ENCODE measurements at regions of chr3 and their contacts with region 1.

Region 1: GRCh38 chr3:187227658-187228258 is 30.5 kb downstream of the RTP1 start:
- DNase-seq: no peak
- ATAC-seq: no peak
- H3K4me3 ChIP-seq: no peak overlapping the region
- H3K27ac ChIP-seq: no peak overlapping the region
- H3K4me1 ChIP-seq: no peaks in the 10 kb centered on the region
- H3K27me3 ChIP-seq: no peaks in the 10 kb centered on the region
- CTCF ChIP-seq: no peak

Region 2: GRCh38 chr3:187291001-187291511 is 63.3 kb after region 1 on chr3:
- intact Hi-C with region 1: loop called in 4 of 10 experiments (anchors 5 to 10 kb)
- DNase-seq: peak in 1 of 2 donors; percentile 17
- ATAC-seq: peak; percentile 23 to 59 (median 44)
- H3K4me3 ChIP-seq: peak overlapping the region; percentile 20 to 65 (median 51)
- H3K27ac ChIP-seq: peak overlapping the region; percentile 57 to 92 (median 84)
- H3K4me1 ChIP-seq: peaks cover 2 to 64% (median 24%) of the 10 kb centered on the region in 9 donors
- H3K27me3 ChIP-seq: peaks cover 0 to 11% (median 0%) of the 10 kb centered on the region in 7 donors
- CTCF ChIP-seq: no peak

Region 3: GRCh38 chr3:187314176-187314575 is 86.4 kb after region 1 on chr3:
- intact Hi-C with region 1: loop called in 7 of 10 experiments (anchors 2 to 10 kb)
- DNase-seq: no peak
- ATAC-seq: no peak
- H3K4me3 ChIP-seq: no peak overlapping the region
- H3K27ac ChIP-seq: no peak overlapping the region
- H3K4me1 ChIP-seq: peaks cover 0 to 8% (median 4%) of the 10 kb centered on the region in 9 donors
- H3K27me3 ChIP-seq: peaks cover 0 to 28% (median 11%) of the 10 kb centered on the region in 7 donors
- CTCF ChIP-seq: no peak

Region 4: DNA sequence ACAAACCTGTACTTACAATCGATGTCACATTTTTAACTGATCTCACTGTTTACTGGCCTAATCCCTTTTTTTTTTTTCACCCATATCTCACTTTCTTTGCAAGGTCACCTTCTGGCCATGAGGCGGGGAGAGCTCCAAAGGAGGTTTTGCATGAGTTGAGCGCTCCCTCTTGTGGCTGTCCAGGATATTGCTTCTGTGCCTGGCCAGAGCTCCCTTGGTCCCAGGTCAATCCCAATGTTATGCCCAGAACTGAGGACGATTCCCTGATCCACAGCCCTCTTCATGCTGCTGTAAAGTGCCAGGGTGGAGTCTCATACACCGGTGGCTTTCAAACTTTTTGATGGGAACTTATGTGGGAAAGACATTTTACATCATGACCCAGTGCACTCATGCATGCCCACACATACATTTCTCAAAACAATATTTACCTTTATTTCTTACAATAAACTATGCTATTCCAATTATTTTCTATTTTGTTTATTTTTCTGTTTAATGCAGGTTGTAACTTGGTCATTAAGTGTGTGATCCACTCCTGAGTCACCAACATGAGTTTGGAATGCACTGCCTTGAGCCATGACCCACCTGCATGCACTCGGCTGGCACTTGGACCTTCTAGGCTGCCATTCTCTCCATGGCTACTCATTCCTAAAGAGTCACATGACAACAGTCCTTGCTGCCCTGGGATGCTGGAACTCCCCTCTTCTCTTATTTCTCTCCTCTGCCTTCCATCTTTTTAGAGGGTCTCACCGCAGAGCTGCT is 452.1 kb after region 1 on chr3:
- intact Hi-C with region 1: loop called in 6 of 10 experiments (anchors 5 to 10 kb)
- DNase-seq: peak; percentile 73 to 78
- ATAC-seq: peak; percentile 86 to 95 (median 92)
- H3K4me3 ChIP-seq: no peak overlapping the region
- H3K27ac ChIP-seq: no peak overlapping the region
- H3K4me1 ChIP-seq: peaks cover 0 to 12% (median 6%) of the 10 kb centered on the region in 9 donors
- H3K27me3 ChIP-seq: peaks cover 0 to 20% (median 3%) of the 10 kb centered on the region in 7 donors
- CTCF ChIP-seq: peak; percentile 81 to 94 (median 92)